Naive thymus-derived CD4-positive, alpha-beta T cell (primary cell): ENCODE measurements at regions of chr22 and their contacts with region 1.

Region 1: GRCh38 chr22:35430897-35431322 is 31.0 kb downstream of the MCM5 start:
- DNase-seq: peak; percentile 30 to 74 (median 59)
- ATAC-seq: peak; percentile 83
- H3K4me3 ChIP-seq: no peak overlapping the region
- H3K4me3 Mint-ChIP-seq: no peak overlapping the region
- H3K27ac ChIP-seq: no peak overlapping the region
- H3K27ac Mint-ChIP-seq: no peak overlapping the region
- H3K4me1 ChIP-seq: no peaks in the 10 kb centered on the region
- H3K4me1 Mint-ChIP-seq: peaks cover 0 to 3% (median 0%) of the 10 kb centered on the region in 7 donors
- H3K27me3 ChIP-seq: no peaks in the 10 kb centered on the region
- H3K27me3 Mint-ChIP-seq: no peaks in the 10 kb centered on the region

Region 2: DNA sequence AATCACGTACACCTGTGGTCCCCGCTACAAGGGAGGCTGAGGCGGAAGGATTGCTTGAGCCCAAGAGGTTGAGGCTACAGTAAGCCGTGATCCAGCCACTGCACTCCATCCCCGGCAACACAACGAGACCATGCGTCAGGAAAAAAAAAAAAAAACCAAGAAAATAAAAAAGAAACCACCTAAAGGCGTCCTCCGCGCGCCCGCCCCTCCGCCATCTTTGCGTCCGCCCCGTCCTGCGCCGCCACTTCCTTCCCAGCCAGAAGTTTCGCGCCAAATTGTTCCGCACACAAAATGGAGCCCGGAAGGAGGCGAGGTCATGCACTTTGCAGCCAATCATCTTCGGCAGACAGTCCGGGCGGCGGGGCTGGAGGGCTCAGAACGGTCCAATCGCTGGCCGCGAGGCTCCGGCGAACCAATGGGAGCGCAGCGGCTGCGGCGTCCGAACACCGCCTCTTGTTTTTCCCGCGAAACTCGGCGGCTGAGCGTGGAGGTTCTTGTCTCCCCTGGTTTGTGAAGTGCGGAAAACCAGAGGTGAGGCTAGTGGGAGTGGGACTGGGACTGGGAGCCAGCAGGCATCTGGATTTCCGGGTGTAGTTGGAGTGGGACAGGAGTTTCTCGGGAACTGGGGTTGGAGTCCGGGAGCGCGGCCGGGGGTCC is 31.1 kb before region 1 on chr22 and contains the start of gene MCM5:
- CTCF ChIA-PET with region 1: no interaction called
- POLR2A ChIA-PET with region 1: no interaction called
- intact Hi-C with region 1: no loop called
- DNase-seq: peak; percentile 86 to 98 (median 97)
- ATAC-seq: peak; percentile 99
- H3K4me3 ChIP-seq: peak within 1 kb of the TSS; percentile 86
- H3K4me3 Mint-ChIP-seq: peak within 1 kb of the TSS; percentile 94 to 99 (median 99)
- H3K27ac ChIP-seq: peak within 1 kb of the TSS; percentile 80
- H3K27ac Mint-ChIP-seq: peak within 1 kb of the TSS; percentile 90 to 99 (median 96)
- H3K4me1 ChIP-seq: peaks cover 5 to 7% of the 10 kb centered on the region in 2 donors
- H3K4me1 Mint-ChIP-seq: peaks cover 16 to 35% (median 19%) of the 10 kb centered on the region in 7 donors
- H3K27me3 ChIP-seq: no peaks in the 10 kb centered on the region
- H3K27me3 Mint-ChIP-seq: no peaks in the 10 kb centered on the region
- total RNA-seq, gene MCM5: 34.7 to 208 (median 50.7) TPM

Region 3: GRCh38 chr22:35477911-35478582 is 47.1 kb after region 1 on chr22:
- CTCF ChIA-PET with region 1: no interaction called
- POLR2A ChIA-PET with region 1: no interaction called
- intact Hi-C with region 1: no loop called
- DNase-seq: no peak
- ATAC-seq: peak; percentile 26
- H3K4me3 ChIP-seq: no peak overlapping the region
- H3K4me3 Mint-ChIP-seq: no peak overlapping the region
- H3K27ac ChIP-seq: no peak overlapping the region
- H3K27ac Mint-ChIP-seq: no peak overlapping the region
- H3K4me1 ChIP-seq: no peaks in the 10 kb centered on the region
- H3K4me1 Mint-ChIP-seq: peaks cover 0 to 13% (median 6%) of the 10 kb centered on the region in 7 donors
- H3K27me3 ChIP-seq: no peaks in the 10 kb centered on the region
- H3K27me3 Mint-ChIP-seq: peaks cover 17 to 53% (median 44%) of the 10 kb centered on the region in 5 donors

Region 4: DNA sequence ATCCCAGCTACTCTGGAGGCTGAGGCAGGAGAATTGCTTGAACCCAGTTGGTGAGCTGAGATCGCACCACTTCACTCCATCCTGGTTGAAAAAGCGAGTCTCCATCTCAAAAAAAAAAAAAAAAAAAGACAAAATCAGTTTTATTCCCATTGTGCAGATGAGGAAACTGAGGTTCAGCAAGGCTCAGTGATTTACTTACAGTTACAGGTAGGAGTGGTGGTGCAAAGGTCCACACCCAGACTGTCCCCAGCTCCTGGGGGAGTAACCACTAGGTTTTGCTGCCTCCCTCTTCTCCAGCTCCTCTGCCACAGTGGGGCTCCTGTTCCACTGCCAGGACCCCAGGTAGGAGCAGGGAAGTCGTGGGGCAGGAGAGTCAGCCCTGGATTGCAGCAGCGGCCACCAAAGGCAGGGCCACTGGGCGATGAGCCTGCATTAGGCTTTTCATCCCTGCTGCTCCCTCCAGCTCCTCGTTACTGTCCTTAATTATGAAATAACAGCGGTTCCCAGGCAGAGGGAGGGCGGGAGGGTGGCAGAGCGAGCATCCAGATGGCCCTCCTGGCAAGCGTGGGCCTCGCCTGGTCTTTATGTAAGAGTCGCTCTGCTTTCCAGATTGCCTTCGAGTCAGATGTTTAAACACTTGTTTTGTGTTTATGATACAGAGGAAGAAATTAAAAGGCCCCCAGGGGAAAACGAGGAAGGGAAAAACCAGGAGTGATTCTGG is 94.2 kb after region 1 on chr22:
- CTCF ChIA-PET with region 1: no interaction called
- POLR2A ChIA-PET with region 1: no interaction called
- intact Hi-C with region 1: no loop called
- DNase-seq: no peak
- ATAC-seq: no peak
- H3K4me3 ChIP-seq: no peak overlapping the region
- H3K4me3 Mint-ChIP-seq: no peak overlapping the region
- H3K27ac ChIP-seq: no peak overlapping the region
- H3K27ac Mint-ChIP-seq: no peak overlapping the region
- H3K4me1 ChIP-seq: no peaks in the 10 kb centered on the region
- H3K4me1 Mint-ChIP-seq: peaks cover 0 to 2% (median 0%) of the 10 kb centered on the region in 7 donors
- H3K27me3 ChIP-seq: no peaks in the 10 kb centered on the region
- H3K27me3 Mint-ChIP-seq: peaks cover 5 to 24% (median 14%) of the 10 kb centered on the region in 5 donors

Region 5: GRCh38 chr22:35582861-35583670 is 152.2 kb after region 1 on chr22:
- CTCF ChIA-PET with region 1: interaction called, 8 read pairs
- POLR2A ChIA-PET with region 1: no interaction called
- intact Hi-C with region 1: loop called (anchors 1 kb)
- DNase-seq: peak; percentile 22 to 70 (median 40)
- ATAC-seq: peak; percentile 82
- H3K4me3 ChIP-seq: no peak overlapping the region
- H3K4me3 Mint-ChIP-seq: no peak overlapping the region
- H3K27ac ChIP-seq: no peak overlapping the region
- H3K27ac Mint-ChIP-seq: no peak overlapping the region
- H3K4me1 ChIP-seq: no peaks in the 10 kb centered on the region
- H3K4me1 Mint-ChIP-seq: peaks cover 0 to 6% (median 0%) of the 10 kb centered on the region in 7 donors
- H3K27me3 ChIP-seq: no peaks in the 10 kb centered on the region
- H3K27me3 Mint-ChIP-seq: peaks cover 0 to 7% (median 0%) of the 10 kb centered on the region in 5 donors

Region 6: GRCh38 chr22:35622191-35622913 is 191.4 kb after region 1 on chr22:
- CTCF ChIA-PET with region 1: no interaction called
- POLR2A ChIA-PET with region 1: no interaction called
- intact Hi-C with region 1: loop called (anchors 1 to 2 kb)
- DNase-seq: no peak
- ATAC-seq: no peak
- H3K4me3 ChIP-seq: no peak overlapping the region
- H3K4me3 Mint-ChIP-seq: no peak overlapping the region
- H3K27ac ChIP-seq: no peak overlapping the region
- H3K27ac Mint-ChIP-seq: no peak overlapping the region
- H3K4me1 ChIP-seq: peaks cover 0 to 5% of the 10 kb centered on the region in 2 donors
- H3K4me1 Mint-ChIP-seq: peaks cover 0 to 13% (median 10%) of the 10 kb centered on the region in 7 donors
- H3K27me3 ChIP-seq: no peaks in the 10 kb centered on the region
- H3K27me3 Mint-ChIP-seq: peaks cover 0 to 14% (median 8%) of the 10 kb centered on the region in 5 donors

Region 7: GRCh38 chr22:35739076-35739930 is 308.4 kb after region 1 on chr22:
- CTCF ChIA-PET with region 1: no interaction called
- POLR2A ChIA-PET with region 1: no interaction called
- intact Hi-C with region 1: no loop called
- DNase-seq: peak in 2 of 9 donors; percentile 2 to 5
- ATAC-seq: no peak
- H3K4me3 ChIP-seq: no peak overlapping the region
- H3K4me3 Mint-ChIP-seq: peak overlapping the region in 1 of 10 donors; percentile 11
- H3K27ac ChIP-seq: no peak overlapping the region
- H3K27ac Mint-ChIP-seq: no peak overlapping the region
- H3K4me1 ChIP-seq: no peaks in the 10 kb centered on the region
- H3K4me1 Mint-ChIP-seq: peaks cover 0 to 1% (median 0%) of the 10 kb centered on the region in 7 donors
- H3K27me3 ChIP-seq: no peaks in the 10 kb centered on the region
- H3K27me3 Mint-ChIP-seq: peaks cover 0 to 4% (median 0%) of the 10 kb centered on the region in 5 donors